ENCODE measurements at regions of chr2 and their contacts with region 1.

Region 1: DNA sequence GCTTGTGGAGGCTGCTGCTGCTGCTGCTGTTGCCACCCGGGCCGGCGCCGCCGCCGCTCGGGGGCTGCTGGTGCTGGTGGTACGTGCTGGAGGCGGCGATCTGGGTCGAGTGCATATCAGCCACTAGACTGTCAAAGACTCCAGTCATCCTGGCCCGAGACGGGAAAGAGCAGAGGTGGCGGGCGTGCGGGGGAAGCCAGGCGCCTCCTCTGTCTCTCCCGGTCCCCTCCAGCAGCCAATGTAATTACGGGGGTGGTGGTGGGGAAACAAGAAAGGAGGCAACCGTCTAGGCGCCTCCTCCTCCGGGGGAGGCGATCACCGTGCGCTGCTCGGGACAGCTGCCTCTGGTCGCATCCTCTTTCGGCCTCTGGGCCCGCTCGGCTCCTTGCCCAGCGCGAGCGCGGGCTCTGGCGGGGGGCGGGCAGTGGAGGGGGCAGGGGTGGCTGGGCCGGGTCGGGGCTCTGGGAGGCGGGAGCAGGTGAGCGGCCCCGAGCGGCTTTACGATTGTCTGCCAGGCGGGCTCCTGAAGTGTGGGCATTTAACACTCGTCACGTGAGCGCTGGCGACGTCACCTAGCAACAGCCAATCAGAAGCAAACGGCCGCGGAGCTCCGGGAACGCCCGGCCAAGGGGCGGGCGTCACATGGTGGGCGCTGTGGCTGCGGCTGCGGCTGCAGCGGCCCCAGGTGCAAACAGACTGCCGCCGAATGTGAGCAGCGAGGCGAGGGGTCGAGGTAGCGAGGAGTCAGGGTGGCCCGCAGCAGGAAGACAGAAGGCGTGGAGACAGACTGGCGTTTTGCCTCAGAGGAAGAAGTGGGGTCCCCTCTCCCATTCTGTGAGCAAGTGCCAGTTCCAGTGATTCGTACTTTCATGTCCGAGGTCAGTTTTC is at the start of gene DLX2:
- DNase-seq: peak; percentile 93
- H3K4me3 ChIP-seq: peak within 1 kb of the TSS; percentile 68
- H3K27ac ChIP-seq: no peak within 1 kb of the TSS
- H3K4me1 ChIP-seq: no peaks in the 10 kb centered on the region
- CTCF ChIP-seq: 0 out of 2 replicates have a peak, but pooled peaks have one; percentile 20
- total RNA-seq, gene DLX2: 0.22 TPM in 1 of 2 replicates, not detected in the other

Region 2: DNA sequence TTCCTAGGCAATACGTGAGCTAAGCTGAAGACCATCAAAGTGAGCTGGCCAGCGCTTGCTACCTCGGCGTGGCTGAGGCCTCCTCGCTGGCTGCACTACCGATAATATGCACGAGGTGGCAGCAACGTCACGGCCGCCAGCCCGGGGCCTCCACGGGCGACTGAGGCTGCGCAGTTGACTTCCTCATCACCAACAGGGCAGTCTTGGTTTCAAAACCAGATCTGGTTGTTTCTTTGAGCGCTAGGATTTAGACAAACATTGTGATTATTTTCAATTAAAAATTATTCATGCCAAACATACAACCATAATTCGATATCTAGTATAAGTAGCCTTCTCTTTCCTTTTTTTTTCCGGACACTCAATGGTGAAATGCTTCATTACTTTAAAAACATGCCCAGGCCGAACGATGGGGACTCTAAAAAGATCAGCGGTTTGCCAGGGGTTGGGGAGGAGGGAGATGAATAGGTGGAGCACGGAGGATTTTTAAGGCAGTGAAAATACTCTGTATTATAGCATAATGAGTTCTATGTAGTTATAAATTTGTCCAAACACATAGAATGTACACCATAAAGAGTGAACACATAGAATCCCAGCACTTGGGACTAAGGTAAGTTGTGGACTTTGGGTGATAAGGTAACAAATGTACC is 528.4 kb before region 1 on chr2:
- CTCF ChIA-PET with region 1: no interaction called
- POLR2A ChIA-PET with region 1: no interaction called
- intact Hi-C with region 1: loop called (anchors 1 kb)
- DNase-seq: peak; percentile 70
- H3K4me3 ChIP-seq: no peak overlapping the region
- H3K27ac ChIP-seq: no peak overlapping the region
- H3K4me1 ChIP-seq: no peaks in the 10 kb centered on the region
- CTCF ChIP-seq: peak; percentile 97

Region 3: GRCh38 chr2:171598713-171599319 is 503.8 kb before region 1 on chr2:
- CTCF ChIA-PET with region 1: no interaction called
- POLR2A ChIA-PET with region 1: no interaction called
- intact Hi-C with region 1: loop called (anchors 2 kb)
- DNase-seq: peak; percentile 82
- H3K4me3 ChIP-seq: no peak overlapping the region
- H3K27ac ChIP-seq: no peak overlapping the region
- H3K4me1 ChIP-seq: no peaks in the 10 kb centered on the region
- CTCF ChIP-seq: peak; percentile 95

Region 4: DNA sequence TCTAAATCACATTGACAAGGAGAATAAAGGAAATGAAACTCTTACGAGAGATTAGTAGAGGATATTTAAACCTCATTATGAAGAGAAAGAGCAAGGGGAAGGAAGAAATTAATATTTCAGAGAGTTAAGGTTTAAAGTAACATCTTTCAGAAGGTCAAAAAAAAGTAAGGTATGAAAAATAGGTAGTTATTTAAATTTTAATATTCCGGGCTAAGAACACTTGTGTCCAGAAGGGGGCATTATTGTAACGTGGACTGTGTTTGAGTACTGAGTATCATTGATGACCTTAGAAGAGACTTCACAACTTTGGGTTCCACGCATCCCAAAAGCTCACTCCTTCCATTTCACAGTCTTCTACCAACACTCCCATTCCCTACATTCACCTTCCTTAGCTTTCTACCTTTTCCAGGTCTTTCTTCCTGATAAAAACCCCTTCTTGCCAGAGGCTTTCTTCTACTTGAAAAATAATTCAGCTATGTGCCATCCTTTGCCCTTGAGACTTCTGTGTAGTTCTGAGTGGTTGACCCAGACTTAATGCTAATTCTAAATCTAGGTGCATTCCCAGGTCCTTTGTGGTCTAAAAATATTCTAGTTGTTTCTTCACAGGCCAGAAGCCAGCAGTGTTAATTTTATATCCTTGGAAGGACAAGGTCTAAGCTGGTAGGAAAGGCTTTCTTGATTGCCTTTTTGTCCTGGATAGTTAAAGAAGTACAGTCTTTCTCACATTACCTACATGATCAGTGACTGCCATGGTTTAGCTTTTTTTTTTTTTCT is 398.9 kb before region 1 on chr2:
- CTCF ChIA-PET with region 1: interaction called, 3 read pairs
- POLR2A ChIA-PET with region 1: no interaction called
- intact Hi-C with region 1: loop called (anchors 1 kb)
- DNase-seq: peak; percentile 56
- H3K4me3 ChIP-seq: no peak overlapping the region
- H3K27ac ChIP-seq: no peak overlapping the region
- H3K4me1 ChIP-seq: peaks cover 9% of the 10 kb centered on the region
- CTCF ChIP-seq: peak; percentile 81

Region 5: GRCh38 chr2:171811245-171811628 is 291.4 kb before region 1 on chr2:
- CTCF ChIA-PET with region 1: interaction called, 3 read pairs
- POLR2A ChIA-PET with region 1: interaction called, 4 read pairs
- intact Hi-C with region 1: loop called (anchors 1 kb)
- DNase-seq: peak; percentile 42
- H3K4me3 ChIP-seq: no peak overlapping the region
- H3K27ac ChIP-seq: no peak overlapping the region
- H3K4me1 ChIP-seq: no peaks in the 10 kb centered on the region
- CTCF ChIP-seq: peak; percentile 74

Region 6: DNA sequence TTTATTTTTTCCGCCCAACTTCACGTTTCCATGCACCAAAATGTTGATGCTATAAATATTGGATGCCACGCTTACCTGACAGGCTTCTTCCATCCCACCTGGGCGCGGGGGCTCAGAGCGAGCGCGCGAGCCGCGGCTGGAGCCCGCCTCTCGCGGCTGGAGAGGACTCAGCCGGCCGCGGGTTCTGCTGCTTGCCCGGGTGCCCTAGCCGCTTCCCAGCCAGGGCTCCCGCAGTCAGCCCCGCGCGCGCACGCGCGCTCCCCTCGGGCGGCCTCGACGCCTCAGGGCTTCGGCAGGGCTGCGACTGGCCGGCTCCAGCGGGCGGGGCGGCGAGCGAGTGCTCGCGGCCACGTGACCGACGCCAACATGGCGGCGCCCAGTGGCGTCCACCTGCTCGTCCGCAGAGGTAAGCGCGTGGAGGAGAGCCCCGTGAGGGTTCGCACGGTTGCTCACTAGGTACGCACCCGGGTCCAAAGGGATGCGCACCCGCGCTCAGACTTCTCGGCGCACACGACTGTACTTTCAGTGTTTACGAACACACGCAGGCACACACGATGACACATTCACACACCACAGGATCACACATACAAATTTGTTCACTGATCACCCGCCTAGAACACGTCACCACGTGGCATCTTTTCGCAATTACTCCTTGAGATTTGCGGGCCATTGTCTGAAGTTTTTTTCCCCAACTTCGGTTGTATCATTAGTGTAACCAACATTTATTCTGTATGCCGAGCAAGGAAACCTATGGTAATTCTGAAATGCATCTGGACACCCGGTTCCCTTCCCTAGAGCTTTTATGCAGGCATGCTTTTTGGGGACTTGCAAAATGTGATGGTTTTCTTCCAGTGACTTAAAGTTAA is 102.8 kb before region 1 on chr2 and contains the start of gene METAP1D:
- CTCF ChIA-PET with region 1: no interaction called
- POLR2A ChIA-PET with region 1: no interaction called
- intact Hi-C with region 1: loop called (anchors 10 kb)
- DNase-seq: peak; percentile 94
- H3K4me3 ChIP-seq: peak within 1 kb of the TSS; percentile 70
- H3K27ac ChIP-seq: peak within 1 kb of the TSS; percentile 7
- H3K4me1 ChIP-seq: peaks cover 18% of the 10 kb centered on the region
- CTCF ChIP-seq: no peak; the same call in 1 of the 2 replicates
- total RNA-seq, gene METAP1D: 4.5 and 11.0 TPM in 2 replicates

Measured in OCI-LY7 (cell line).